Right ventricle myocardium inferior (tissue), 1 donor: ENCODE measurements at regions of chr9 and their contacts with region 1.

Region 1: DNA sequence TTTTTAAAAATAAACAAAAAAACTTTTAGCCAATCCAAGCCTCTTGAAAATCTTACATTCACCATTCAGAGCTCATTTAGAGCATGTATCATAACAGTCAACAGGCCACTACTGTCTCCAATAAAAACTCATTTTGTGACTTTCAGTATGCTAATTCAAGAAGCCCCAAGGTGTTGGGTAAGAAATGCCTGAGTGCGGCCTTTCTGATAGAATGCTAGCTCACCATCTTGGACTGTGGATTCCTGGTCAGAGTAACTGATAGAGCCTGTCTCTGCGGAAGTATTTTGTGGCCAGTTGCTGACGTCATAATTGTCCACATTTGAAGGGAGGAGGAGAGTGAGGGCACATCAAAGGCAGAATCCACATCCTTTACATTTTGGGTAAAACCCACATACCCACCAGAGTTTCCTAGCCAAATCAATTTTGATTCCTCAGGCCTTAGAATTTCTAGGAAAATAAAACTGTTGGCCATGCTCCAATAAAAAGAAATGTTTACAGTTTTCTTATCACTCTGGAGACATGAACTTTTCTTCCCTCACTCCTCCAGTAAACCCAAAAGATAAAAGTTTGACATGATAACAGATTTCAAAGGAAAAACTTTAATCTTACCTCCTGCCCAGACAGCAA is 41.1 kb upstream of the ERCC6L2 start:
- DNase-seq: no peak
- ATAC-seq: no peak

Region 2: DNA sequence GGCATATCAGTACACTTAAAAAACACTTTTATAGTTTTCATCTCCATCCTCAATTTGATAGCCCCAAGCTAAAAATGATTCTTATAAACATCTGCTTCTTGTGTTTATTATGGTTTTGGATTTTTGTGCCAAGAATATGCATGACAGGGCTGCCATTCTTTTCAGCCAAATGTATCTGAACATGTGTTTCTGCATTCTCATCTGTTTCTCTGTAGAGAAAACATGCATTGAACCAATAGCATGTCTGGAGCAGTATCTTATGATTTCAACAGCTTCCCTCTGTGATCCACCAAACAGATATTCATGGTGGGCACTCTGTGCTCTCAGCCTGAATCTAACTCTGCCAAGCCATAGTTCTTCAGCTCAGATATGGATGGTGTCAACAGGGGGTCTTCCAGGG is 58.2 kb before region 1 on chr9:
- intact Hi-C with region 1: loop called (anchors 2 kb)
- DNase-seq: no peak
- ATAC-seq: no peak